Spleen (tissue), 13 donors: ENCODE measurements at regions of chr3 and their contacts with region 1.

Region 1: DNA sequence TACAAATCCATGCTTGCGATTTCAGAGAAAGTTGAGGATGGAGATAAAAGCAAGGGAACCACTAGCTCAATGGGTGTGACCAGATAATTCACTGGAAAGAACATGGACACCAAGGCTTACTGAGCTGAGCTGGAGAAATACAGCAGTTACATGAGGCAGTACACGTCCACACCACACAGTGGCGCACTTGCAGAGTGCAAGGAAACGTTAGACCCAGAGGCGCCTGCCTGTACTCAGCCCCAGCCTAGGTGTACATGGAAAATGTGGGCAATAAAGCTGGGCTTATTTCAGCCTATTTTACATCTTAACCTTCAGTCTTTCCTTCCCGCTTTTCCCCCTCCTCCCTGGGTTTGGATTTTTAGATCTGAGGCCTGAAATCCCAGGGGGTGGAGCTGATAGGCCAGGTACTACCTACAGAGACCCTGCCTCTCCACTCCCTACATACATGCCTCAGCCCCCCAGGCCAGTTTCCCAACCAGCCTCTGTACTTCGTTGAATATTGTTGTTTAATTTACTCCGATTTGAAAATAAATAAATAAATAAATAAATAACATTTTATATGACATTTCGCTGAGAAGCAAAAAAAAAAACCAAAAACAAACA is 60.1 kb downstream of the PCOLCE2 start:
- DNase-seq: peak; percentile 87
- H3K4me3 ChIP-seq: no peak overlapping the region
- H3K27ac ChIP-seq: no peak overlapping the region
- H3K4me1 ChIP-seq: peaks cover 0 to 4% (median 0%) of the 10 kb centered on the region in 6 donors
- H3K27me3 ChIP-seq: no peaks in the 10 kb centered on the region
- CTCF ChIP-seq: peak; percentile 48 to 87 (median 74)
- POLR2A ChIP-seq: no peak

Region 2: DNA sequence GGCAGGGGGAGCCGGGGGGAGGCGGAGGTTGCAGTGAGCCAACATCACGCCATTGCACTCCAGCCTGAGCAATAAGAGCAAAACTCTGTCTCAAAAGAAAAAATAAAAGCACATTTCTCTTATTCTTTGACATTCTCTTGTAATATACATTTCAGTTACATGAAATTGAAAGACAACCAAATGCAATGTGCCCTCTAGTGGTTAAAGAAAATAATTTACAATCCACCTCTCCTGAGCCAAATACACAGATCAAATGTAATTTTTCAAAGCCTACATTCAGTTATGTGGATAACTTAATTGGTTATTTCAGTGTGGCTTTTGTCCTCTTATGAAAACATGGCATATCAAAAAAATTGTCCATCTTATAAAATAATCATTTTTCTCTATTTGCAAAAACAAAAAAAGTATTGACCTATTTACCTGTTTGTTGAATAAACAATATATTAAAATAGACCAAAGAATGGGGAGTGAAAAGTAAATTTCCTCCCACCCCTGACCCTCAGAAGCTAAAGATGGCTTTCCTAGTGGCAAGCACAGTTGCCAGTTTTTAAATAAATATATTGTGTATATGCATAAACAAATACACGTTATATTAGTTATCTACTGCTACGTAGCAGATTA is 158.4 kb after region 1 on chr3:
- intact Hi-C with region 1: loop called (anchors 5 kb)
- DNase-seq: no peak
- H3K4me3 ChIP-seq: no peak overlapping the region
- H3K27ac ChIP-seq: no peak overlapping the region
- H3K4me1 ChIP-seq: peaks cover 0 to 9% (median 4%) of the 10 kb centered on the region in 6 donors
- H3K27me3 ChIP-seq: peaks cover 0 to 4% (median 0%) of the 10 kb centered on the region in 7 donors
- CTCF ChIP-seq: peak; percentile 20 to 74 (median 64)
- POLR2A ChIP-seq: no peak